ENCODE measurements at regions of chr1 and their contacts with region 1.

Region 1: GRCh38 chr1:184805667-184806295 is 51.1 kb upstream of the EDEM3 start:
- DNase-seq: peak; percentile 86
- H3K4me3 ChIP-seq: no peak overlapping the region
- H3K27ac ChIP-seq: no peak overlapping the region
- H3K27me3 ChIP-seq: no peaks in the 10 kb centered on the region
- CTCF ChIP-seq: peak; percentile 97

Region 2: GRCh38 chr1:184118046-184118445 is 687.7 kb before region 1 on chr1:
- in situ Hi-C with region 1: no loop called
- DNase-seq: peak; percentile 100
- H3K4me3 ChIP-seq: no peak overlapping the region
- H3K27ac ChIP-seq: peak overlapping the region; percentile 85
- H3K27me3 ChIP-seq: no peaks in the 10 kb centered on the region
- CTCF ChIP-seq: no peak

Region 3: DNA sequence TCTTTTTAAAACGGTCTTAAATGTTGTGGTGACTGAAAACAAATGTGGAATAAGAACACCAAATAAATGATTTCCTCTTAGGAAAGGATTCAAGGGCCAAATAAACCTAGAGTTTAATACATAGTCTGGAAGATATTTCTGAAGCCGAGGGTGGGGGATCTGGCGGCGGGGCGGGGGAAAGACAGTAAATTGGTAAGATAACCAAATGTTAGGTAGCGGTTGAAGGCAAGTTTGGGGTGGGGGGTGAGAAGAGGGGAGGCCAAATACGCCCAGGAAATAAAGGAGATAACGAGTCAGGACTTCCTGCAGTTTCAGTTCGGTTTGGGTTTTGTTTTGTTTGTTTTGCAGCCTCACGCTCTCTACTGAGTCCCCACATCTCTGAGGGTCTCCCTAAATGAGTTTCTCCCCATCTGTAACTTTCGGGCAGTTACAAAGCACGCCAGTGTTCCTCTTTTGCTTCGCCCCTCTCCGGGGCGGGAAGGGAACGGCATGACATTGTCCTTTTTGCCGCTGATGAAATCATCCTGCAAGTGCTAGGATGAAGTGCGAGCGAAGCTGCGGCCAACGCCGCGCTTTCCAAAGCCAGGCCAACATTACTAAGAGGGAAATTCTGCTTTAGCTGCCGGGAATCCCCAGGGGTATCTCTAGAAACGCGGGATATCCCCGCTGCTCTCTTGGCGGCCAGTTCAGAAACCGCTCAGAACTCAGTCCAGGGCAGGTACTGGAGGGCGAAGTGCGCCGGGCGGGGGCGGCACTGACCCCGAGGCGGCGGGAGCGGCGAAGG is 167.7 kb after region 1 on chr1:
- in situ Hi-C with region 1: loop called (anchors 25 kb)
- DNase-seq: no peak
- H3K4me3 ChIP-seq: peak overlapping the region; percentile 60
- H3K27ac ChIP-seq: peak overlapping the region; percentile 0
- H3K27me3 ChIP-seq: no peaks in the 10 kb centered on the region
- CTCF ChIP-seq: no peak

Region 4: DNA sequence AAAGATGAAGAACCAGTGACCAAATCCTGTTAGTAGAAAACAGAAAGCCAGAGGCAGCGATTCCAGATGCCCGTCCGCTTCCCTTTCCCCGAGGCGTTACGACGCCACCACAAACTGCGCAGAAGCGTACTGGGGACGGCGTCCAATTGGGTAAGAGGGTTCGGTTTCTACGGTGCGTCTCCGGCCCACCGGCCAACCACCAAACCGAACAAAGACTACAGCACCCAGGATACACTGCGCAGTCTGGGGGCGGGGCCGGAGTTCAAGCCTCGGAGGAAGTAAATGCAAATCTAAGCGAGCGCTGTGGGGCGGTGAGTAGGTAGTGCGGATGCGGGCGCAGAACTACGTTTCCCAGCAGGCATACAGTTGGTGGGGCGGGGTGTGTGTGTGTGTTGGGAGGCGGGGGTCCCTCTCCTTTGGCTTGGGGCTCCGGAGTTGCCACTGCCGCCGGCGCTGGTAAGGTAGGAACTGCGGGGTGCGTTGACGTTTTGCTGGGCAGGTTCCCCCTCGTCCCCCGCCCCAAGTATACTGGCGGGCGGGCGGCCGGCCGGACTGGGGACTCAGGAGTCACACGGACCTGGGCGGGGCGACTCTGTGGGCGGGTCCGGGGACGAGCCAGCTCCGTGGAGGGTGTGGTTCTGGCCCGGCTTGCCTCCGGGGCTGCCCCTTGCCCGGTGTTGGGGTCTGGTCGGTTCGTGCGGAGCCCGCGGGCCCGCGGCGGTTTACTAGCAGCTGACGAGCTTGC is 351.2 kb after region 1 on chr1 and contains the starts of genes SWT1 and TRMT1L:
- in situ Hi-C with region 1: loop called (anchors 25 kb)
- DNase-seq: peak; percentile 100
- H3K4me3 ChIP-seq: peak within 1 kb of the TSS; percentile 87
- H3K27ac ChIP-seq: peak within 1 kb of the TSS; percentile 94
- H3K27me3 ChIP-seq: no peaks in the 10 kb centered on the region
- CTCF ChIP-seq: no peak

Measured in brain microvascular endothelial cell (primary cell).